ENCODE measurements at regions of chr3 and their contacts with region 1.

Region 1: DNA sequence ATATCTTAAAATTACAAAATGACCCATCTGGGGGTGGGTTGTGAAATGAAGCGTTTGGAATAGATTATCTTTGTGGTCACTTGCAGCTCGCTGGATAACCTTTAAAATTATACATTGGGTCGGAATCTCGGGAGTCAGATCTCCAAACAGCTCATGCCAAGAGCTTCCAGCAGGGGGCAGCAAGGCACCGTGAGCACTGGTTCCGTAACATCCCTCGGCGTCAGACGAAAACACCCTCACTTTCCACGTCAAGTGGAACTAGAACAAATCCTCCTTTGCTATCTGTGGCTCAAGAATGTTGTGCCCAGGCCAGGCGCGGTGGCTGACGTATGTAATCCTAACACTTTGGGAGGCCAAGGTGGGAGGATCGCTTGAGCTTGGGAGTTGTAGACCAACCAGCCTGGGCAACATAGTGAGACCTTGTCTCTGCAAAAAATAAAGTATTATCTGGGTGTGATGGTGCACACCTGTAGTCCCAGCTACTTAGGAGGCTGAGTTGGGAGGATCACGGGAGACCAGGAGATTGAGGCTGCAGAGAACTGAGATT is 31.1 kb downstream of the UMPS start:
- DNase-seq: peak; percentile 85

Region 2: DNA sequence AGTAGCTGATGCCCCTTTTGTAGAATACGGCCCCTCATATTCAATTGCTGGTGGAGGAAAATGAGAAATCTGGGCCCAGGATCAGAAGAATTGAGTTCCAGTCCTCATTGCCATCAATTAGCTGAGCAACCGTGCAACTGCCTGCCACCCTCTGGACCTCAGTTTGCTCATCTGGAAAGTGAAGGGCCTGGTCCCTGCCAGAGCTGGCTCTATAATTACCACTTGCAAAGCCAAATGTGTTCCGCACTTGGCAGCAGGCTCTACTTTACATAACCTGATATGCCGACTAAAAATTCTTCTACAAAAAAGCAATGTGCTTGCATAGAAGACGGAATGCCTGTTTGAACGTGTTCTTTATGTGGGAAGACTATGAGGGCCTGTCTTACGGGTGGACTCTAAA is 134.4 kb after region 1 on chr3:
- in situ Hi-C with region 1: loop called (anchors 10 kb)
- DNase-seq: no peak

Measured in G401 (cell line).